Naive thymus-derived CD4-positive, alpha-beta T cell (primary cell): ENCODE measurements at regions of chr6 and their contacts with region 1.

Region 1: GRCh38 chr6:6008648-6009421 is 2.1 kb upstream of the NRN1 start:
- DNase-seq: peak in 3 of 9 donors; percentile 18 to 71 (median 23)
- ATAC-seq: peak; percentile 66
- H3K4me3 ChIP-seq: peak overlapping the region; percentile 36
- H3K4me3 Mint-ChIP-seq: peak overlapping the region; percentile 32 to 87 (median 80)
- H3K27ac ChIP-seq: no peak overlapping the region
- H3K27ac Mint-ChIP-seq: no peak overlapping the region
- H3K4me1 ChIP-seq: peaks cover 20 to 36% of the 10 kb centered on the region in 2 donors
- H3K4me1 Mint-ChIP-seq: peaks cover 27 to 52% (median 44%) of the 10 kb centered on the region in 7 donors
- H3K27me3 ChIP-seq: peaks cover 43 to 45% of the 10 kb centered on the region in 2 donors
- H3K27me3 Mint-ChIP-seq: peaks cover 68 to 82% (median 70%) of the 10 kb centered on the region in 5 donors

Region 2: GRCh38 chr6:4775584-4776494 is 1233.0 kb before region 1 on chr6 and contains the start of gene CDYL:
- CTCF ChIA-PET with region 1: no interaction called
- POLR2A ChIA-PET with region 1: no interaction called
- intact Hi-C with region 1: loop called in 1 of 2 experiments (anchors 5 kb)
- DNase-seq: peak; percentile 75 to 94 (median 88)
- ATAC-seq: peak; percentile 89
- H3K4me3 ChIP-seq: peak within 1 kb of the TSS; percentile 58
- H3K4me3 Mint-ChIP-seq: peak within 1 kb of the TSS; percentile 84 to 96 (median 93)
- H3K27ac ChIP-seq: peak within 1 kb of the TSS; percentile 63
- H3K27ac Mint-ChIP-seq: peak within 1 kb of the TSS; percentile 61 to 94 (median 87)
- H3K4me1 ChIP-seq: peaks cover 0 to 10% of the 10 kb centered on the region in 2 donors
- H3K4me1 Mint-ChIP-seq: peaks cover 32 to 48% (median 46%) of the 10 kb centered on the region in 7 donors
- H3K27me3 ChIP-seq: no peaks in the 10 kb centered on the region
- H3K27me3 Mint-ChIP-seq: peaks cover 0 to 38% (median 0%) of the 10 kb centered on the region in 5 donors
- total RNA-seq, gene CDYL: 25.5 to 43.3 (median 35.1) TPM

Region 3: GRCh38 chr6:5584078-5584482 is 424.8 kb before region 1 on chr6:
- CTCF ChIA-PET with region 1: no interaction called
- POLR2A ChIA-PET with region 1: no interaction called
- intact Hi-C with region 1: loop called in 1 of 2 experiments (anchors 5 kb)
- DNase-seq: no peak
- ATAC-seq: no peak
- H3K4me3 ChIP-seq: no peak overlapping the region
- H3K4me3 Mint-ChIP-seq: peak overlapping the region in 1 of 10 donors; percentile 45
- H3K27ac ChIP-seq: no peak overlapping the region
- H3K27ac Mint-ChIP-seq: no peak overlapping the region
- H3K4me1 ChIP-seq: peaks cover 0 to 12% of the 10 kb centered on the region in 2 donors
- H3K4me1 Mint-ChIP-seq: peaks cover 9 to 25% (median 19%) of the 10 kb centered on the region in 7 donors
- H3K27me3 ChIP-seq: no peaks in the 10 kb centered on the region
- H3K27me3 Mint-ChIP-seq: no peaks in the 10 kb centered on the region

Region 4: DNA sequence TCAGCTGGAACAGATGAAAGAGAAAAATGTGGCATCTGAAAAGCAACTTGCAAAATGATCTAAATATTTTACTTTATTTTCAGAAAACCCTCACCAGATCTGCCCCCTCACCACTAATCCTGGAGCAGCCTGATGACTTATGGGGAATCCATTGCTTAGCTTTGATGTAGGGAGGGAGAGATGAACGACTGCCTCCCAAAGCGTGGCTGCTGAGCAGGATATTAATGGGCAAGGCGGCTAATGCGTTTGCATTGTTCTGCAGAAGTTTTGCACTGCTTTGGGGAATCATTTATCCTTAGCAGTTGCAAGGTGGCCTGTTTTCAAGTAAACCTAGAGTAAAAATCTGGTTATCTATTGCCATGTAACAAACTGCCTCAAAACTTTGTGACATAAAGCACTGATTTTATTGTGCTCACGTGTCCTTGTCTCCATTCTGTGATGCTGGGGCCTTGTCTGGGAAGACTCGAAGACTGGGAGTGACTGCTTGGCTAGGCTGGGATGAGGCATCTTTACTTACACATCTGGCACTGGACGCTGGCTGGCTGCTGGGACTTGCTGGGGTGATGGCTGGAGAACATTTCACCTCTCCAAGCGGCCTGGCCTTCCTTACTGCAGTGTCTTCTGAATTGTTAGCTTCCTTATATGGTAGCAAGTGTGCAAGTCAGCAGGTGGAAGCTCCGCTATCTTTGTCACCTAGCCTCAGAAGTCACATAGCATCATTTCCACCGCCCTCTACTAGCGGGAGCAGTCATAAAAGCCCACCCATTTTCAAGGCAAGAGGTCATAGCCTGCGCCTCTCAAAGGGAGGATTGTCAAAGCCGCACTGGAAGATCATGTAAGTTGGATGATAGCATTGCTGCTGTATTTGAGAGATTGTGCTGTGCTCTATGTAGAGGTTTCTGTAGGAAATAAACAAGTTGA is 315.4 kb before region 1 on chr6:
- CTCF ChIA-PET with region 1: no interaction called
- POLR2A ChIA-PET with region 1: no interaction called
- intact Hi-C with region 1: no loop called
- DNase-seq: no peak
- ATAC-seq: no peak
- H3K4me3 ChIP-seq: no peak overlapping the region
- H3K4me3 Mint-ChIP-seq: peak overlapping the region in 1 of 10 donors; percentile 29
- H3K27ac ChIP-seq: no peak overlapping the region
- H3K27ac Mint-ChIP-seq: peak overlapping the region in 5 of 9 donors; percentile 15 to 63 (median 32)
- H3K4me1 ChIP-seq: peaks cover 0 to 14% of the 10 kb centered on the region in 2 donors
- H3K4me1 Mint-ChIP-seq: peaks cover 5 to 32% (median 27%) of the 10 kb centered on the region in 7 donors
- H3K27me3 ChIP-seq: no peaks in the 10 kb centered on the region
- H3K27me3 Mint-ChIP-seq: no peaks in the 10 kb centered on the region

Region 5: DNA sequence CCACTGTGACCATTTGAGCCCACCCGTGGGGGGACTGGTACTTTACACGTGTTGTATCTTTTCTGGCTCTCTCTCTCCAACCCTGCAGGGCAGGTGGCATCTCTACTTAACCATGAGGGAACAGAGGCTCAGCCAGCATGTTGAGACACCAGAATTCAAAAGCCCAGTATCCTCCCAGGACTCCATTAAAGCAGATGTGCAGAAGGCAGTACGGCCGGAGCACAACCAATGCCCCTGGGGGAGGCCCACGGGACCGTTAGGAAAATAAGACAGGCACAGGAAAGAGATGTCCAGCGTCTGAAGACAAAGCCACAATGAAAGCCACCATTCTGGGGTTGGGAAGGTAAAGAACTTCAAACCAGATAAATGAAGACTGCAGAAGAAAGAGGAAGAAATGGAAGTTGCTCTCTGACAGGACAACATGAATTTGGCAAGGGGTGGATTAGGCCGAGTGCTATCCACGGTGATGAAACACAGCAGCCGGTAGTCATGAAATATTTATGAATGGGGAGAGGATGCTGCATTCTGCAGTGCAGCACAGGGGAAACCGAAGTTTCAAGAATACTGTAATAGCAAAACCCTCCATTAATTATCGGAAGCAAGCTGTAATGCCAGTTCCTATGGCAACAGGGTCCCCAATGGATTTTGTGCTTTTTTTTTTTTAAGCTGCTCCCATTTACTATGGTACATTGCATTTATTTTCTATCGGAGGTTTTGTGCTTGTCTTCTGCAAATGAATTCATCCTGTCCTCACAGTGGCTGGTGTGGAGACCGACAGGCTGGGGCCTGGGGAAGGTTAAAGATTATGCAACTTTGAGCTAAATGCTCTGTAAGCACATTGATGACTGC is 181.6 kb before region 1 on chr6:
- CTCF ChIA-PET with region 1: no interaction called
- POLR2A ChIA-PET with region 1: no interaction called
- intact Hi-C with region 1: no loop called
- DNase-seq: no peak
- ATAC-seq: no peak
- H3K4me3 ChIP-seq: no peak overlapping the region
- H3K4me3 Mint-ChIP-seq: peak overlapping the region in 2 of 10 donors; percentile 12 to 52
- H3K27ac ChIP-seq: no peak overlapping the region
- H3K27ac Mint-ChIP-seq: peak overlapping the region in 4 of 9 donors; percentile 2 to 68 (median 38)
- H3K4me1 ChIP-seq: peaks cover 25 to 40% of the 10 kb centered on the region in 2 donors
- H3K4me1 Mint-ChIP-seq: peaks cover 28 to 76% (median 66%) of the 10 kb centered on the region in 7 donors
- H3K27me3 ChIP-seq: no peaks in the 10 kb centered on the region
- H3K27me3 Mint-ChIP-seq: no peaks in the 10 kb centered on the region

Region 6: GRCh38 chr6:5995949-5996713 is 12.7 kb before region 1 on chr6:
- CTCF ChIA-PET with region 1: interaction called, 4 read pairs
- POLR2A ChIA-PET with region 1: interaction called, 4 read pairs
- intact Hi-C with region 1: loop called (anchors 1 kb)
- DNase-seq: peak in 1 of 9 donors; percentile 29
- ATAC-seq: no peak
- H3K4me3 ChIP-seq: peak overlapping the region; percentile 84
- H3K4me3 Mint-ChIP-seq: peak overlapping the region; percentile 87 to 93 (median 90)
- H3K27ac ChIP-seq: no peak overlapping the region
- H3K27ac Mint-ChIP-seq: peak overlapping the region in 8 of 9 donors; percentile 15 to 86 (median 64)
- H3K4me1 ChIP-seq: peaks cover 27 to 53% of the 10 kb centered on the region in 2 donors
- H3K4me1 Mint-ChIP-seq: peaks cover 48 to 69% (median 58%) of the 10 kb centered on the region in 7 donors
- H3K27me3 ChIP-seq: peaks cover 44 to 80% of the 10 kb centered on the region in 2 donors
- H3K27me3 Mint-ChIP-seq: peaks cover 86 to 95% (median 93%) of the 10 kb centered on the region in 5 donors

Region 7: DNA sequence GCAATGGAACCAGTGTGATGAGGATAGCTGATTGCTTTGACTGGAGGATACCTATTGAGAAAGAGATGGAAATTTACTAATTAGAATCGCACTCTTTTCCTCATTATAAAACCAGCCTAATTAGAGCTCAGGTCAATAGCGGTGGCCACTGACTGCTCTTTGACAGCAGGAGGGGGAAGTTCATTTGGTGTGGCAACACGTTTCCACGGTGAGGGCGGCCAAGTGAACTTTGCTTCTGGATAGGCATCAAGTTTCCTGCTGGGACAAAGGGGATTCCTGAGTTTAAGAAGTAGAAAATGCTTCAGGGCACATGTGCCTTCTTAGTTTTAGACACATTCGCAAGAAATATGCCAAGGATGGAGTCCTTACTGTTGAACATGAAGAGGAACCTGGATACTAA is 143.2 kb after region 1 on chr6:
- CTCF ChIA-PET with region 1: no interaction called
- POLR2A ChIA-PET with region 1: no interaction called
- intact Hi-C with region 1: no loop called
- DNase-seq: no peak
- ATAC-seq: no peak
- H3K4me3 ChIP-seq: no peak overlapping the region
- H3K4me3 Mint-ChIP-seq: no peak overlapping the region
- H3K27ac ChIP-seq: no peak overlapping the region
- H3K27ac Mint-ChIP-seq: no peak overlapping the region
- H3K4me1 ChIP-seq: no peaks in the 10 kb centered on the region
- H3K4me1 Mint-ChIP-seq: no peaks in the 10 kb centered on the region
- H3K27me3 ChIP-seq: no peaks in the 10 kb centered on the region
- H3K27me3 Mint-ChIP-seq: peaks cover 0 to 16% (median 13%) of the 10 kb centered on the region in 5 donors

Region 8: DNA sequence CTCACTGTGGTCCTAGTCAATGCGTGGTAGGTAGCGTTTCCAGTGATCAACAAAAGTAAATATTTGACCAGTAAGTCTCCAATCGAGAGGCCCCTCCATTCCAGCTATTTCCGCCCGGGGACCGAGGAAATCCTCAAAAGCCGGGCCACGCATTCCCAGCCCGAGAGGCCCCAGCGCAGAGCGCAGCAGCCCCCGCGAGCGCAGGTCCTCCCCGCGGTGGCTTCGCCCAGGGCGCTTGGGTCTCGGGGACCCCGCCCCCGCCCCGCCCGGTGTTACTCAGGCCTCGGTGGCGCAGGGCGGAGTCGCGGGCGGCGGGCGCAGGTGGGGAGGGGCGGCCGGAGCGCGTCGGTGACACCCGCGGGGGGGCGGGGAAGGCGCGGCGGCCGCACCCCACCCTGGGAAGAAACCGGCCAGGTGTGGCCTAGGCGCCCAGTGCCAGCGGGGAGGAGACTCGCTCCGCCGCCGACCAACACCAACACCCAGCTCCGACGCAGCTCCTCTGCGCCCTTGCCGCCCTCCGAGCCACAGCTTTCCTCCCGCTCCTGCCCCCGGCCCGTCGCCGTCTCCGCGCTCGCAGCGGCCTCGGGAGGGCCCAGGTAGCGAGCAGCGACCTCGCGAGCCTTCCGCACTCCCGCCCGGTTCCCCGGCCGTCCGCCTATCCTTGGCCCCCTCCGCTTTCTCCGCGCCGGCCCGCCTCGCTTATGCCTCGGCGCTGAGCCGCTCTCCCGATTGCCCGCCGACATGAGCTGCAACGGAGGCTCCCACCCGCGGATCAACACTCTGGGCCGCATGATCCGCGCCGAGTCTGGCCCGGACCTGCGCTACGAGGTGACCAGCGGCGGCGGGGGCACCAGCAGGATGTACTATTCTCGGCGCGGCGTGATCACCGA is 1532.6 kb after region 1 on chr6 and contains the start of gene DSP:
- CTCF ChIA-PET with region 1: no interaction called
- POLR2A ChIA-PET with region 1: no interaction called
- intact Hi-C with region 1: loop called in 1 of 2 experiments (anchors 10 kb)
- DNase-seq: peak in 5 of 9 donors; percentile 2 to 48 (median 5)
- ATAC-seq: peak; percentile 40
- H3K4me3 ChIP-seq: peak within 1 kb of the TSS; percentile 41
- H3K4me3 Mint-ChIP-seq: peak within 1 kb of the TSS; percentile 69 to 89 (median 78)
- H3K27ac ChIP-seq: no peak within 1 kb of the TSS
- H3K27ac Mint-ChIP-seq: no peak within 1 kb of the TSS
- H3K4me1 ChIP-seq: no peaks in the 10 kb centered on the region
- H3K4me1 Mint-ChIP-seq: peaks cover 5 to 19% (median 9%) of the 10 kb centered on the region in 7 donors
- H3K27me3 ChIP-seq: peaks cover 10 to 27% of the 10 kb centered on the region in 2 donors
- H3K27me3 Mint-ChIP-seq: peaks cover 67 to 82% (median 76%) of the 10 kb centered on the region in 5 donors
- total RNA-seq, gene DSP: 0.02 TPM in 1 of 5 experiments, not detected in the others